ENCODE measurements at regions of chr1 and their contacts with region 1.

Region 1: DNA sequence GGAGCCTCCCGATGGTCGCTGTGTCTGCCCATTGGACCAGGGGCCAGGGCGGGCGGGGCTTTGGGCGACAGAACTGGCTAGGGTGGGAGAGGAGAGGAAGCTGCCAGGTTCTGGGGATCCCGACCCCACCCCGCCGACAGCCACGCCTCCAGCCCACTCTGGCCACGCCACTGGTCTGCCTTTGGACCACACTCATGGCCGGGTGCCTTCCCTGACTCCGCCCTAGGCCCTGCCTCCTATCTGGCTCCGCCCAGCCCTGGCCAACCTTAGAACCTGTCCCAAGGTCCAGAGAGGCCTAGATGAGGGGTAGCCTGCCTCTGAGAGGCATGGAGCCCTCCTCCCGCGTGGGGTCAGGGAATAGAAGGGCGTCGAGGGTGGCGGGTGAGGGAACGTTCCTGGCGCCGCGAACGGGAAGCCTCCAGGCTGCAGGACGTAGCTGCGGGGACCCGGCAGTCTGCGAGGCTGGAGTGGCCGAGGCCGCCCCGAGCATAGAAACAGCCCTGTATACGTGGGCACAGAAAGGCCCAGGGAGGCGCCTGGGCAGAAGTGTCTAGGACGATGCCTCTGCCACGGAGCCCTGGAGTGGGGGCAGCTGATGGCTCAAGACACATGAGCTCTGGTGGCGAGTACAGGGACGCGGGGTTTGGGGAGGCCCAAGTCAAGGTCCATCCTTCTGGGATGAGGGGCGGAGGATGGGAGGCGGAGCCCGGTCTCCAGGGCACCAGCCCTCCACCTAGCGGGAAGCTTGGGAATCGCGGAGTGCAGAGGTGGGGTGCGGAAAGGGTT is 11.5 kb upstream of the COL16A1 start:
- DNase-seq: peak in 5 of 14 experiments; percentile 15 to 49 (median 27)
- ATAC-seq: peak; percentile 58
- H3K4me3 ChIP-seq: peak overlapping the region; percentile 24
- H3K4me3 Mint-ChIP-seq: peak overlapping the region; percentile 77
- H3K27ac ChIP-seq: no peak overlapping the region
- H3K27ac Mint-ChIP-seq: no peak overlapping the region
- H3K4me1 ChIP-seq: peaks cover 18% of the 10 kb centered on the region
- H3K4me1 Mint-ChIP-seq: peaks cover 21% of the 10 kb centered on the region
- H3K27me3 ChIP-seq: peaks cover 33 to 42% of the 10 kb centered on the region in 2 experiments
- H3K27me3 Mint-ChIP-seq: peaks cover 75% of the 10 kb centered on the region
- CTCF ChIP-seq: peak; percentile 38

Region 2: DNA sequence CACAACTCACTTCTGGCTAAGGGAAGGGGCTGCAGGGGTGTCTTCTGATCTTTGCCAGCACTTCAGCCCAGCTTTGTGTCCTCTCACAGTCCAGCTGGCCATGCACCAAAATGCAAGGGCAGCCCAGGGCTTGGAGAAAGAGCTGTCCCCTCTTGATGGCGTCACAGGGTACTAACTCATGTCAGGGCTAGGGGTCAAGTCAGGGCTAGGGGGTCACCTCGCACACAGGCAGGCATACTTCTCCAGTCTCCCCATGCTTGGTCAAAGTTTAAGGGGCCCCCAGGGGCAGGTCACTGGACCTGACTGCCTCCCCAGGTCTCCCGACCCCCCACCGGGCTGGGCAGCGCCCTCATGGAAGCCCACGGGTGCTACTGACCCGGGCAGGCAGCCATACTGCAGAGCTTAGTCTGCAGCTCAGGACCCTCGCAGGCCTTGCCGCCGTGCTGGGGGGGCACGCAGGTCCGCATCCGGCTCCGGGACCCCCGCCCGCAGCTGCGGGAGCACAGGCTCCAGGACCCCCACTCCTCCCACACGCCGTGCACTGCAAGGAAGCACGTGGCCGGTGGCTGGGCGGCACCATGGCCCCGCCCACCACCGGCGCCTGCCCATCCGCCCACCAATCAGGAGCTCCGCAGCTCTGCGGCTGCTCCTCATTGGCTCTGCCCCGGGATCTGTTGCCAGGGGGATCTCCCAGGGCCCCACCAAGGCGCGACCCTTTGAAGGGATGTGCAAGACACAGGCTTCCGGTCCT is 27.4 kb after region 1 on chr1:
- CTCF ChIA-PET with region 1: no interaction called
- POLR2A ChIA-PET with region 1: no interaction called
- intact Hi-C with region 1: loop called in 1 of 2 experiments (anchors 2 kb)
- DNase-seq: no peak
- ATAC-seq: no peak
- H3K4me3 ChIP-seq: no peak overlapping the region
- H3K4me3 Mint-ChIP-seq: no peak overlapping the region
- H3K27ac ChIP-seq: no peak overlapping the region
- H3K27ac Mint-ChIP-seq: no peak overlapping the region
- H3K4me1 ChIP-seq: peaks cover 46% of the 10 kb centered on the region
- H3K4me1 Mint-ChIP-seq: peaks cover 7% of the 10 kb centered on the region
- H3K27me3 ChIP-seq: no peaks in the 10 kb centered on the region
- H3K27me3 Mint-ChIP-seq: no peaks in the 10 kb centered on the region
- CTCF ChIP-seq: no peak